Activated CD8-positive, alpha-beta T cell treated with anti-CD3 and anti-CD28 coated beads, Interleukin-2, amount 10 ng/mL, durations not matched to agents 7 days and 5 days (primary cell): ENCODE measurements at regions of chr19 and their contacts with region 1.

Region 1: DNA sequence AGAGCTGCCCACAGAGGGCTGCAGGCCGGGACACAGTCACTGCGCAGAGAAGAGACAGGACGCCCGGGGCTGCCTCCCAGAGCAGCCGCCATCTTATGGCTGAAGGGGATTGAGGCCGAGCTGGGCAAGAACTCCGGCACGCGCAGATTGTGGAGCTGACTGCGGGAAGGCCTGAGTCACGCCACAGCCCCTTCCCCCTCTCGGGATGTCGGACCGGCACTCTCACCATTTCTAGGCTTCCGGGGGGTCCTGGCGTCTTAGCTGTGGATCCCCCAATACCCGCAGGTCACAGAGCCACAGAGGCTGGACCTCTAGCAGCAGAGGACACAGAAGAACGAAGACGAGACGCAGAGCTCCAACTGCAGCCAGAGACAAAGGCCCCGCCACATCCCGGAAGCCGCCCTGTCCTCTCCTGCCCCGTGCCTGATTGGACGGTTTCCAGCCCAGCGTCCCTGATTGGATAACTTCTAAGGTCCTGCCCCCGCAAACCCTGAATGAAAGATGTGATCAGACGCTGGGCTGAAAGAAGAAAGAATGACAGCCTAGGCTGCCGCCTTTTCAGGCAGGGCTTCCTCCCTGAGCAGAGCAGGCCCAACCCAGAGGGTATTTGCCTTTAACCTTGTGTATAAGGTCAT is at the start of gene ZNF43:
- DNase-seq: peak; percentile 96
- ATAC-seq: peak; percentile 99
- H3K4me3 Mint-ChIP-seq: peak within 1 kb of the TSS; percentile 98
- H3K27ac Mint-ChIP-seq: peak within 1 kb of the TSS; percentile 99
- H3K4me1 Mint-ChIP-seq: peaks cover 30% of the 10 kb centered on the region
- H3K27me3 Mint-ChIP-seq: no peaks in the 10 kb centered on the region
- total RNA-seq, gene ZNF43: 31.3 to 34.3 TPM

Region 2: GRCh38 chr19:21396893-21397572 is 438.9 kb before region 1 on chr19 and contains the start of gene ZNF493:
- CTCF ChIA-PET with region 1: no interaction called
- POLR2A ChIA-PET with region 1: interaction called, 11 read pairs
- DNase-seq: peak; percentile 97
- ATAC-seq: peak; percentile 100
- H3K4me3 Mint-ChIP-seq: peak within 1 kb of the TSS; percentile 96
- H3K27ac Mint-ChIP-seq: peak within 1 kb of the TSS; percentile 98
- H3K4me1 Mint-ChIP-seq: peaks cover 21% of the 10 kb centered on the region
- H3K27me3 Mint-ChIP-seq: no peaks in the 10 kb centered on the region
- total RNA-seq, gene ZNF493: 20.3 to 21.6 TPM

Region 3: DNA sequence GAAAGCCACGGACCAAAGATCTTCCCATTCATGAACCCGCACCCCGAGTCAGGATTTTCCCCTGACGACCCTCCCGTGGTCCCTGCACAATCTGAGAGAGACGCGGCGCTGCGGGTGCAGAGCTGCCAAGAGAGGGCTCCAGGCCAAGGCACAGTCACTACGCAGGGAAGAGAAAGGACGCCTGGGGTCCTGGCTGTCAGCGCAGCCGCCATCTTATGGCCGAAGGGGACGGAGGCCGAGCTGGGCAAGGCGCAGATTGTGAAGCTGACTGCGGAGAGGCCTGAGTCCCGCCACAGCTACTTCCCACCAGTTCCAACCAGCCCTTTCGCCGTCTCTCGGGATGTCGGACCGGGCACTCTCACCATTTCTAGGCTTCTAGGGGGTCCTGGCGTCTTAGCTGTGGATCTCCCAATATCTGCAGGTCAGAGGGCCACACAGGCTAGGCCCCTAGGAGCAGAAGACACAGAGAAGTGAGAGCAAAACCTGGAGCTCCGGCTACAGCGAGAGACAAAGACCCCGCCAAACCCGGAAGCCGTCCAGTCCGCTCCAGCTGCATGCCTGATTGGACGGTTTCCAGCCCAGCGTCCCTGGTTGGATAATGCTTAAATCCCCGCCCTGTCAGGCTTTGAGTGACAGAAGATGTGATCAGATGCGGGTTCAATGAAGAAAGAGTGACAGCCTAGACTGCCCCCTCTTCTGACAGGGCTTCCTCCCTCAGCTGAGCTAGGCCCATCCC is 68.7 kb before region 1 on chr19 and contains the start of gene ZNF100:
- CTCF ChIA-PET with region 1: interaction called, 4 read pairs
- POLR2A ChIA-PET with region 1: interaction called, 36 read pairs
- DNase-seq: peak; percentile 94
- ATAC-seq: peak; percentile 99
- H3K4me3 Mint-ChIP-seq: peak within 1 kb of the TSS; percentile 92
- H3K27ac Mint-ChIP-seq: peak within 1 kb of the TSS; percentile 90
- H3K4me1 Mint-ChIP-seq: peaks cover 21% of the 10 kb centered on the region
- H3K27me3 Mint-ChIP-seq: no peaks in the 10 kb centered on the region
- total RNA-seq, gene ZNF100: 21.6 to 28.4 TPM

Region 4: DNA sequence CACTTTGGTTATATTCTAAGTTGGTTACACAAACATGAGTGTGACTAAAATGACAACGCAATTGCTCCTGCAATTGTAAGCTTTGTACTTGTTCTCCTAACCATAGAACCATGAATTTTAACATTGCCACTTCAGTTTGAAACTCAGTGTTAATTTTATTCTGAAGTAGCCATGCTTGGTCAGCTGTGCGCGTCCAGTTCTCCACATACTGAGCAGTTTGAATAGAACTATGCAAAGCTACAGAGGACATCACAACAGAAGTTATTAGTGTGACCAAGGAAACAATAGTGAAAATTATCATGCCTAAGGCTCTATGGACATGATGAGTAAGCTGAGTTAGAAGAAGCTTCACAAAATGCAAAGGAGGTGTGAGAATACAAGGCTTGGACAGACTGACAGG is 49.0 kb before region 1 on chr19:
- CTCF ChIA-PET with region 1: no interaction called
- POLR2A ChIA-PET with region 1: no interaction called
- DNase-seq: no peak
- ATAC-seq: no peak
- H3K4me3 Mint-ChIP-seq: no peak overlapping the region
- H3K27ac Mint-ChIP-seq: no peak overlapping the region
- H3K4me1 Mint-ChIP-seq: no peaks in the 10 kb centered on the region
- H3K27me3 Mint-ChIP-seq: no peaks in the 10 kb centered on the region

Region 5: GRCh38 chr19:21812450-21812849 is 23.5 kb before region 1 on chr19:
- CTCF ChIA-PET with region 1: no interaction called
- POLR2A ChIA-PET with region 1: no interaction called
- DNase-seq: no peak
- ATAC-seq: no peak
- H3K4me3 Mint-ChIP-seq: no peak overlapping the region
- H3K27ac Mint-ChIP-seq: no peak overlapping the region
- H3K4me1 Mint-ChIP-seq: no peaks in the 10 kb centered on the region
- H3K27me3 Mint-ChIP-seq: no peaks in the 10 kb centered on the region

Region 6: GRCh38 chr19:21851596-21852345 is 15.8 kb after region 1 on chr19:
- CTCF ChIA-PET with region 1: interaction called, 13 read pairs
- POLR2A ChIA-PET with region 1: interaction called, 71 read pairs
- DNase-seq: peak; percentile 93
- ATAC-seq: peak; percentile 99
- H3K4me3 Mint-ChIP-seq: peak overlapping the region; percentile 93
- H3K27ac Mint-ChIP-seq: peak overlapping the region; percentile 92
- H3K4me1 Mint-ChIP-seq: peaks cover 29% of the 10 kb centered on the region
- H3K27me3 Mint-ChIP-seq: no peaks in the 10 kb centered on the region

Region 7: GRCh38 chr19:21970466-21970865 is 134.5 kb after region 1 on chr19:
- CTCF ChIA-PET with region 1: no interaction called
- POLR2A ChIA-PET with region 1: no interaction called
- DNase-seq: no peak
- ATAC-seq: no peak
- H3K4me3 Mint-ChIP-seq: no peak overlapping the region
- H3K27ac Mint-ChIP-seq: no peak overlapping the region
- H3K4me1 Mint-ChIP-seq: no peaks in the 10 kb centered on the region
- H3K27me3 Mint-ChIP-seq: no peaks in the 10 kb centered on the region